Mammary epithelial cell (primary cell): ENCODE measurements at regions of chr11 and their contacts with region 1.

Region 1: DNA sequence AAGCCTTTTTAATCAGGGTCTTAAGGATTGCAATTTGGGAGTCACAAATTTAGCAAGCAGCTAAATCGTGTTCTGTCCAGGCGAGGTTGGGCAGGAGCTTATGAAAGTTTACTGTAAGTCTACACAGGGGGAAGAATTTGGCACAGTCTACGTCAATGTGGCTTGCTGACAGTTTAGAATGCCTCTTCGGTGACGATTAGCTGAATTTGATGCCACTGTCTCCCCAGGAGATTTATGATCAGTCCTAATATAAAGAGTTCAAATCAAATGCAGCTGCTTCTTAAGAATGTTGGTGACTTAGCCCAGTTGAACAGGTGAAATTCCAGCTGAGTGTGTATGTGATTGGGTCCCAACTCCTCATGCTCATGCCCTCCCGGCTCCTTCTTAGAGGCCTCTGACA is 114.2 kb upstream of the CLPB start:
- DNase-seq: no peak
- H3K4me3 ChIP-seq: no peak overlapping the region
- H3K27ac ChIP-seq: no peak overlapping the region
- H3K4me1 ChIP-seq: peaks cover 12% of the 10 kb centered on the region
- H3K27me3 ChIP-seq: no peaks in the 10 kb centered on the region
- CTCF ChIP-seq: no peak

Region 2: DNA sequence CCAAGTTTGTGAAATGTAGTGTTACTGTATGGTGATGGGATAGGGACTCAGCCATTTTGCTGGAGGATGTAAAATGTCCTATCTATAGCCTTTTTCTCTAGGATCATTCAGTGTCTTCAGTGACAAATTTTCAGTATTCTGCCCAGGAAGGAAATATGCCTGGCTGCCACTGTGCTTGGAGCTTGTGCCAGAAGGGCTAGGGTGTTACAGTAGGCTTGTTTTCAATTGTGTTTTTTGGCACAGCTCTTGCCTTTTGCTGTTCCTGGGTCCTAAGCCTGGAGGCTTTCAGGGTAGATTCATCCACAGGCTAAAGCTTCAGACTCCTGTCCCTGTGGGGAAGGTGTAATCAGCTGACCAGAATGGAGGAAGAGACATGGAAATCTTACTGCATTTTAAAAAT is 282.5 kb before region 1 on chr11:
- CTCF ChIA-PET with region 1: no interaction called
- dilution Hi-C with region 1: loop called (anchors 5 kb)
- in situ Hi-C with region 1: no loop called
- intact Hi-C with region 1: no loop called
- DNase-seq: no peak
- H3K4me3 ChIP-seq: no peak overlapping the region
- H3K27ac ChIP-seq: no peak overlapping the region
- H3K4me1 ChIP-seq: no peaks in the 10 kb centered on the region
- H3K27me3 ChIP-seq: no peaks in the 10 kb centered on the region
- CTCF ChIP-seq: no peak

Region 3: GRCh38 chr11:72446902-72447769 is 101.3 kb before region 1 on chr11:
- CTCF ChIA-PET with region 1: no interaction called
- dilution Hi-C with region 1: loop called (anchors 5 kb)
- in situ Hi-C with region 1: no loop called
- intact Hi-C with region 1: no loop called
- DNase-seq: peak; percentile 61
- H3K4me3 ChIP-seq: no peak overlapping the region
- H3K27ac ChIP-seq: no peak overlapping the region
- H3K4me1 ChIP-seq: no peaks in the 10 kb centered on the region
- H3K27me3 ChIP-seq: no peaks in the 10 kb centered on the region
- CTCF ChIP-seq: peak; percentile 76 to 80

Region 4: GRCh38 chr11:72507050-72507449 is 41.4 kb before region 1 on chr11:
- CTCF ChIA-PET with region 1: no interaction called
- dilution Hi-C with region 1: loop called (anchors 5 kb)
- in situ Hi-C with region 1: no loop called
- intact Hi-C with region 1: no loop called
- DNase-seq: no peak
- H3K4me3 ChIP-seq: no peak overlapping the region
- H3K27ac ChIP-seq: no peak overlapping the region
- H3K4me1 ChIP-seq: no peaks in the 10 kb centered on the region
- H3K27me3 ChIP-seq: no peaks in the 10 kb centered on the region
- CTCF ChIP-seq: no peak

Region 5: GRCh38 chr11:72561856-72562255 is 13.4 kb after region 1 on chr11:
- CTCF ChIA-PET with region 1: no interaction called
- dilution Hi-C with region 1: no loop called
- in situ Hi-C with region 1: no loop called
- intact Hi-C with region 1: loop called (anchors 2 kb)
- DNase-seq: no peak
- H3K4me3 ChIP-seq: no peak overlapping the region
- H3K27ac ChIP-seq: no peak overlapping the region
- H3K4me1 ChIP-seq: no peaks in the 10 kb centered on the region
- H3K27me3 ChIP-seq: no peaks in the 10 kb centered on the region
- CTCF ChIP-seq: no peak

Region 6: GRCh38 chr11:72624623-72625201 is 76.2 kb after region 1 on chr11:
- CTCF ChIA-PET with region 1: no interaction called
- dilution Hi-C with region 1: loop called (anchors 5 kb)
- in situ Hi-C with region 1: no loop called
- intact Hi-C with region 1: no loop called
- DNase-seq: no peak
- H3K4me3 ChIP-seq: no peak overlapping the region
- H3K27ac ChIP-seq: no peak overlapping the region
- H3K4me1 ChIP-seq: no peaks in the 10 kb centered on the region
- H3K27me3 ChIP-seq: no peaks in the 10 kb centered on the region
- CTCF ChIP-seq: no peak